ENCODE measurements at regions of chr7 and their contacts with region 1.

Region 1: GRCh38 chr7:44885394-44886317 is at the start of gene PURB:
- DNase-seq: peak; percentile 93
- H3K27ac ChIP-seq: peak within 1 kb of the TSS; percentile 99
- CTCF ChIP-seq: no peak

Region 2: DNA sequence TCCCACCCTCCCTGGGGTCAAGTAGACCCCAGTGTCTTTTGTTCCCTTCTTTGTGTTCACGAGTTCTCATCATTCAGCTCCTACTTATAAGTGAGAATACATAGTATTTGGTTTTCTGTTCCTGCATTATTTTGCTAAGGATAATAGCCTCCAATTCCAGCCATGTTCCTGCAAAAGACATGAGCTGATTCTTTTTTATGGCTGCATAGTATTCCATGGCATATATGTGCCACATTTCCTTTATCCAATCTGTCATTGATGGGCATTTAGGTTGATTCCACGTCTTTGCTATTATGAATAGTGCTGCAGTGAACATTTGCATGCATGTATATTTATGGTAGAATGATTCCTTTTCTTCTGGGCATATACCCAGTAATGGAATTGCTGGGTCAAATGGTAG is 532.0 kb before region 1 on chr7:
- CTCF ChIA-PET with region 1: no interaction called
- POLR2A ChIA-PET with region 1: no interaction called
- DNase-seq: no peak
- H3K27ac ChIP-seq: no peak overlapping the region
- CTCF ChIP-seq: no peak

Region 3: GRCh38 chr7:44712012-44712411 is 173.6 kb before region 1 on chr7:
- CTCF ChIA-PET with region 1: no interaction called
- POLR2A ChIA-PET with region 1: no interaction called
- DNase-seq: no peak
- H3K27ac ChIP-seq: peak overlapping the region; percentile 48
- CTCF ChIP-seq: no peak

Region 4: GRCh38 chr7:45024126-45024744 is 138.6 kb after region 1 on chr7:
- CTCF ChIA-PET with region 1: no interaction called
- POLR2A ChIA-PET with region 1: interaction called, 12 read pairs
- DNase-seq: no peak
- H3K27ac ChIP-seq: no peak overlapping the region
- CTCF ChIP-seq: no peak

Measured in RWPE1 (cell line).